PC-9 (cell line): ENCODE measurements at regions of chr1 and their contacts with region 1.

Region 1: DNA sequence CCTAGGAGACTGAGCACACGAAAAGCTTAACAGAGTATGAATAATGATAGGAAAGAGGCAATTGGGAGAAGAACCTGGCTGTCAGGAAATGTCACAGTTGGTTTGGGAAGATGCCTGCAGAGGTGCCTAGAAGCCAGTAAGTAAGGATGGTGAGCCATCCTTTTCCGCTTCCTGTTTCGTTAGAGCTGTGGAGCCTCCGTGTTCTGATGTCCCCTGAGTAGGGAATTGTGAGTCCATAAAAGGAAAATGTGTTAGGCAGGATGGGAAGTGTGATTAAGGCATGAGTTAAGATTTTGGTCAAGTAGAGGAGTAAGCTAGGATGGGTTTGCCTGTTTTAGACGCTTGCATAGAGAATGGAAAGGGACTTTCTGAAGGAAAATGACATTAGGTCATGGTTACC is 9.0 kb downstream of the CLIC4 start:
- DNase-seq: no peak
- H3K4me3 ChIP-seq: no peak overlapping the region
- H3K27ac ChIP-seq: no peak overlapping the region
- H3K4me1 ChIP-seq: no peaks in the 10 kb centered on the region
- H3K27me3 ChIP-seq: no peaks in the 10 kb centered on the region
- CTCF ChIP-seq: no peak

Region 2: GRCh38 chr1:24694380-24694843 is 59.8 kb before region 1 on chr1:
- CTCF ChIA-PET with region 1: no interaction called
- POLR2A ChIA-PET with region 1: interaction called, 10 read pairs
- intact Hi-C with region 1: no loop called
- DNase-seq: no peak
- H3K4me3 ChIP-seq: no peak overlapping the region
- H3K27ac ChIP-seq: no peak overlapping the region
- H3K4me1 ChIP-seq: no peaks in the 10 kb centered on the region
- H3K27me3 ChIP-seq: no peaks in the 10 kb centered on the region
- CTCF ChIP-seq: no peak

Region 3: GRCh38 chr1:24765308-24765988 is 11.2 kb after region 1 on chr1:
- CTCF ChIA-PET with region 1: interaction called, 32 read pairs
- POLR2A ChIA-PET with region 1: no interaction called
- intact Hi-C with region 1: no loop called
- DNase-seq: no peak
- H3K4me3 ChIP-seq: no peak overlapping the region
- H3K27ac ChIP-seq: no peak overlapping the region
- H3K4me1 ChIP-seq: no peaks in the 10 kb centered on the region; the same call in 1 of the 2 replicates
- H3K27me3 ChIP-seq: no peaks in the 10 kb centered on the region
- CTCF ChIP-seq: no peak

Region 4: GRCh38 chr1:24782689-24783088 is 28.5 kb after region 1 on chr1:
- CTCF ChIA-PET with region 1: no interaction called
- POLR2A ChIA-PET with region 1: interaction called, 15 read pairs
- intact Hi-C with region 1: no loop called
- DNase-seq: no peak
- H3K4me3 ChIP-seq: no peak overlapping the region
- H3K27ac ChIP-seq: no peak overlapping the region
- H3K4me1 ChIP-seq: peaks cover 4% of the 10 kb centered on the region; the same call in 1 of the 2 replicates
- H3K27me3 ChIP-seq: no peaks in the 10 kb centered on the region
- CTCF ChIP-seq: no peak